GM18951 (cell line): ENCODE measurements at regions of chr7 and their contacts with region 1.

Region 1: GRCh38 chr7:16071246-16071857 is 350.0 kb downstream of the CRPPA start:
- POLR2A ChIP-seq: no peak

Region 2: DNA sequence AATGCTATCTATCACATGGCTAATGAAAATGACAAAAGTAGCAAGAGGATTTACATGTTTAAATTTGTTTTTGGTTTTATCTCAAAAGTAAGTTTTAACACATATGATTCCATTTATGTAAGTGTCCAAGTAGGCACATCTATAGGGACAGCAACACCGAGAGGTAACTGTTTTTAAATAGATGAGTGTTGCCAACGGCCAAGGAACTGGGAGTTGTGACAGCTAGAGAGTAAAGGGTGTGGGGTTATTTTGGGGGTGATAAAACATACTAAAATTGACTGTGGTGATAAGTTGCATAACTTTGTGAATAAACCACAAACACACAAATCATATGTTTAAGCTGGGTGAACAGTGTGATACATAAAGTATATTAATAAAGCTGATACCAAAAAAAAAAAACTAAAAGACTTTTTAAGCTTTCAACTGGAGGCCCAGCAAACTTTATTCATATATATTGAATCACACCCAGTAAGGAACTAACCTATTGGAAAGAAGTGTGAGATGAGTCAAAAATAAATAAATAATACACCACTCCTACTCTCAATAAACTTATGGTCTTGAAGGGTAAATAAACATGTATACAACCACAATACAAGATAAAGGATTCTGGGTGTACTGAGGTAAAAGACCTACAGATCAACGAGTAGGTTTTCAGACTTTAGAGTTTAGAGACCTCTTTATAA is 488.3 kb after region 1 on chr7:
- in situ Hi-C with region 1: loop called (anchors 10 kb)
- POLR2A ChIP-seq: no peak